GM13976 (cell line): ENCODE measurements at regions of chr13 and their contacts with region 1.

Region 1: DNA sequence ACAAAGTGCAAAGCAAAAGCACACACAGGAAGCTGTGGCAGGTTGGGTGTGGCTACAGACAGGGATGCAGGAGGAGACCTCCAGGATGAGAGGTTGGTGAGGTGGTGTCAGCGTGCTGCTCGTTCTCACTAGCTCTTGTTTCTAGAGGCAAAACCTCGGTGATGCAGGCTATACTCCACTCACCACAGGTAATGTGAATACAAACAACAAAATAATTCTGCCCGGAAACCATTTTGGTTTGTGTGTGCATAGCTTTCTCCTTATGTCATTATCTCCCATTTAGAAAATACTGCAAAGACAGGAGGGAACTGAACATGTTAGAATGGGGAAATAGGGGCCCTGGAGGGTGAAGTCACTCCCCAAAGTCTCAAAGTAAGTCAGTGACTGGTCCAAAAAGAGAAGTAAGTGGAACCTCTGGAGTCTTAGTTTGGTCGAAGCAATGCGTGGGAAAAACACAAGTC is 9.4 kb downstream of the LCP1 start:
- DNase-seq: no peak
- CTCF ChIP-seq: no peak

Region 2: DNA sequence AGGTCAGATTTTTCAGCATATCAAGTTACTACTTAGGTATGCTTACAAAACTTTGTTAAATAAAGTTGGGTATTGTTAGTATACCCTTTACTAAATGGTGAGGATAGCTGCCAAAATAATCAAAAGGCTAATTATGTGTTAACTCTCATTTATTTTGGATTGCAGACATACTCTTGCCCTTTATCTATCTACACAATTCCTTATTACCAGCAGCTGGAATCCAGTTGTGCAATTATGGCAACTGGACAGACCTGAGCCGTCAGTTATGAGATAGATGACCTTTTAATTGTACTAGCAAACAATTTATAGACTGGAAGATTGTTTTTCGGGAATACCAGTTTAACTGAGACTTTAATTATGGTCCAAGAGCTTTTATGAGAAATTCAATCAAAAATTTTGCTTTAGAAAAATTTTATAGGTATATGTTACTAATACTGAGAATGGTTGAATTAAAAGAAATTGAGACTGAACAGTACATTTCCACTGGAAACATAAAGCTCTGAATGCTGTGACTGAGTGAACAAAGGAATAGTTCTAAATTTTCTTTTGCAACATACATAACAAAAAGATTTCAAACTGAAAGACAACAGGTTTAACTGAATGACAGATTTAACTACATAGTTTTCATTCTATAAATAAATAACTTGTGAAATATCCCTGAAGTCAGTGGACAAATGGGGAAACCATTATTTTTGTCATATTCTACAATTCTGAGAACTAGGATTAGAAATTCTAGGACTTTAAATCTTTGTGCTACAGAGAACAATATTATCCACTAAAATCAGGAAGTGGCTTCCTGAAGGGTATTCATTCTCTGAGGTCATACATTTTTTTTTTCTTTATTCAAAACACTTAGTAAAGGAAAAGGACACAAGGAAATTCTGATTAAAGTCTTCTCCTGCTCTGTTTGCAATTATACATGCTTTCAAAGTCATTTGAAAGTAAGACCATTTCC is 217.4 kb before region 1 on chr13:
- in situ Hi-C with region 1: no loop called
- DNase-seq: no peak
- CTCF ChIP-seq: no peak

Region 3: DNA sequence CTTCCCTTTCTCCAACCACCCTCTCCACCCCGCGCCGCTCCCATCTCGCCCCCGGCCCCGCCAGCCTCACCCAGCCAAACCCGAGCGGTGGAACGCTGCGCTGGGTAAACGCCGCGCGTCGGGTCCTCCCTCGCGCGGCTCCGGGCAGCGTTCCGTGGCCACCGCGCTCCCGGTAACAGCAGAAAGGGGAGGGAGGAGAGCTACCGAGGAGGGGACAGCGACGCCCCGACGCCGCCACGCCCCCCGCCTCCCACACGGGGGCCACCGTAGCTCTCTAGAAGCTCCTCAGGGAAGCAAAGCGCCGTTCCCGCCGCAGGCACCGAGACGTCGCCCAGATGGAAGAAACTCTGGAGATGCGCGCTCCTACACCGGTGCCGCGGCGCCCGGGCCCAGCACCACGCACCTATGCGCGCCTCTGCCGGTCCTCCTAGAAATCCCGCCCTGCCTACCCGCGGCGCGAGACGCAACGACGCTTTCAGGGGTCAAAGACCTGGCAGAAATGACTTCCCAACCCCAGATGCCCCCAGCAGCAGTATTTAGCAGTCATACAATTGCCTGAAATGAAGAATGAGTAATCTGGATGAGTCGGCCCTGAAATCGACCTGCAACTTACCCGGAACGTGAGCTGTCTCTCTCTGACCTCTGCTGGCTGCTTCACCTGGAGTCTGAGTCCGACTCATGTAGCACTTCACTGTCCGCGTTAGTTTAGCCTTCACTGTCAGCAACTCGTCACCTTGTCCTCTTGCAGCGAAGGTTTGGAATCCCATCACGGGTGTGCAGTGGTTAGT is 214.7 kb after region 1 on chr13 and contains the start of gene RUBCNL:
- in situ Hi-C with region 1: loop called (anchors 5 kb)
- DNase-seq: peak; percentile 87
- CTCF ChIP-seq: peak; percentile 31